PC-9 (cell line): ENCODE measurements at regions of chr6 and their contacts with region 1.

Region 1: GRCh38 chr6:44156494-44157151 is 2.0 kb upstream of the CAPN11 start:
- DNase-seq: no peak
- H3K4me3 ChIP-seq: no peak overlapping the region
- H3K27ac ChIP-seq: no peak overlapping the region
- H3K4me1 ChIP-seq: peaks cover 6% of the 10 kb centered on the region; the same call in 1 of the 2 replicates
- H3K27me3 ChIP-seq: no peaks in the 10 kb centered on the region
- CTCF ChIP-seq: no peak

Region 2: DNA sequence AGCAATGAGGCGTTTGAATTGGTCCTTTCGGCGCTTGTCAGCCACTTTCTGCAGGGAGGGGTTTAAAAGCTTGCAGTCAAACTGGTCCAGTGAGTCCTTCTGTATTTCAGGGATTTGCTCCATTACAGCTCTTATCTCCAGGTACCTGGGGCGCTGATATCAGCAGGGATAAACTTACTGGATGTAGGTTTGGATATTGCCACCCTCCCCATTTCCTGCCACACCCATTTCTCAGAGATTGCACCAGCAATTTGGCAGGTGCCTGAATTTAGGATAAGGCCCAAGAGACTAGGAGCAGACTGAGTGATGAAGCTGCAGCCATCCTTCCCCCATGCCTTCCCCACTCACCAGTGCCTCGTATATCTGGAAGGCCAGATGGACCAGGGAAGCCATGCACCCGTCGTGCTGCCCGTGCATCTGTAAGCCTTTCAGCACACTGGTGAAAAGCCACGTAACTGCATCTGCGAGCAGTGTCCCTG is 632.1 kb before region 1 on chr6:
- CTCF ChIA-PET with region 1: no interaction called
- POLR2A ChIA-PET with region 1: interaction called, 31 read pairs
- intact Hi-C with region 1: no loop called
- DNase-seq: peak in 1 of 2 experiments; percentile 17
- H3K4me3 ChIP-seq: no peak overlapping the region
- H3K27ac ChIP-seq: no peak overlapping the region
- H3K4me1 ChIP-seq: peaks cover 8% of the 10 kb centered on the region
- H3K27me3 ChIP-seq: no peaks in the 10 kb centered on the region
- CTCF ChIP-seq: no peak

Region 3: GRCh38 chr6:44176762-44177509 is 20.3 kb after region 1 on chr6:
- CTCF ChIA-PET with region 1: no interaction called
- POLR2A ChIA-PET with region 1: no interaction called
- intact Hi-C with region 1: no loop called
- DNase-seq: no peak
- H3K4me3 ChIP-seq: no peak overlapping the region
- H3K27ac ChIP-seq: no peak overlapping the region
- H3K4me1 ChIP-seq: no peaks in the 10 kb centered on the region
- H3K27me3 ChIP-seq: no peaks in the 10 kb centered on the region
- CTCF ChIP-seq: no peak